ENCODE measurements at regions of chr7 and their contacts with region 1.

Region 1: DNA sequence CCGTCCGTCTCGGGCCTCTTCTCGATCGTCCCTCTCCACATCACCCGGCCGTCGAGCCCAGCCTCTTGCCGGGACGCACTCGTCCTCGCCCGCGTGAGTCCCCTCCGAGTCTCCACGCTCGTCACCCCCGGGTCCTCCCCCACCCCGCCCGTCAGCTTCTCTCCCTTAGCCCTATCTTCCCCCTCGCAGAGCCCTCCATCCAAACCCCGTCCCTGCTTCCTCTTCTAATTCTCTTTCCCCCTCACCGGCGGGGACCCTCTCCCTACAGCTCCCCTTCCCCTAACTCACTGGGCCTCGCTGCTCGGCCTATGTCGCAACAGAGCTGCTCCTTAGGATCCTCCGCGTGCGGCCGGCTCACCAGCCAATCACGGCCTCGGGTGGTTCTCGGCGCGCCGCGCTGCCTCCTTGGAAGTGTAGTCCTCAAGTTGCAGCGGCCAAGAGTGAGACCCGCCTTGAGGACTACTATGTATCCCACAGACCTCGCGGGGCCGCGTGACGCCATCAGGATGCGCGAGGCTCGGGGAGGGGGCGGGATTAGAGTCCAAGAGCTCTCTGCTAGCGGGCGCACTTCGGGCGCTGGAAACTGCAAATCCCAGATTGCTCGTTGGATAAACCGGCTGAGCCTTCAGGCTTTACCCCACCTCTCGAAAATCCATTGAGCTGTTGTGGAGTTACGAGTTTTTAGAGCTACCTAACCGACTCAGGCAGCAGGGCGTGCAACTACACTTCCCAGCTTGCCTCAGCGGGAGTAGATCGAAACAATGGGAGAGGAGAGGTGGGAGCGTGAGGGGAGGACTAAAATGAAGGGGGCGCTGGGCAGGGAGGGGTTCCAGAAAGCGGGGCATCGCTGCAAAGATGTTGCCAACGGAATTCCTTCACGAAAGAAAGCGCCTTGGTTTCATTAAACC is at the start of gene ABCF2:
- DNase-seq: peak; percentile 94 to 99 (median 98)
- ATAC-seq: peak; percentile 98
- H3K4me3 ChIP-seq: peak within 1 kb of the TSS; percentile 69 to 84
- H3K4me3 Mint-ChIP-seq: peak within 1 kb of the TSS; percentile 100
- H3K27ac ChIP-seq: peak within 1 kb of the TSS; percentile 67 to 79
- H3K27ac Mint-ChIP-seq: peak within 1 kb of the TSS; percentile 97
- H3K4me1 ChIP-seq: peaks cover 27% of the 10 kb centered on the region
- H3K4me1 Mint-ChIP-seq: peaks cover 48% of the 10 kb centered on the region
- H3K27me3 ChIP-seq: no peaks in the 10 kb centered on the region
- H3K27me3 Mint-ChIP-seq: no peaks in the 10 kb centered on the region
- CTCF ChIP-seq: no peak
- total RNA-seq, gene ABCF2: 12.7 to 16.5 TPM

Region 2: GRCh38 chr7:151028131-151028947 is 198.8 kb before region 1 on chr7 and contains the start of gene ABCB8:
- CTCF ChIA-PET with region 1: no interaction called
- POLR2A ChIA-PET with region 1: no interaction called
- intact Hi-C with region 1: loop called in 1 of 2 experiments (anchors 1 kb)
- DNase-seq: peak; percentile 93 to 99 (median 98)
- ATAC-seq: peak; percentile 92
- H3K4me3 ChIP-seq: peak within 1 kb of the TSS; percentile 67 to 75
- H3K4me3 Mint-ChIP-seq: peak within 1 kb of the TSS; percentile 96
- H3K27ac ChIP-seq: peak within 1 kb of the TSS; percentile 94 to 96
- H3K27ac Mint-ChIP-seq: peak within 1 kb of the TSS; percentile 99
- H3K4me1 ChIP-seq: peaks cover 12% of the 10 kb centered on the region
- H3K4me1 Mint-ChIP-seq: peaks cover 24% of the 10 kb centered on the region
- H3K27me3 ChIP-seq: no peaks in the 10 kb centered on the region
- H3K27me3 Mint-ChIP-seq: no peaks in the 10 kb centered on the region
- CTCF ChIP-seq: peak; percentile 35
- total RNA-seq, gene ABCB8: 43.6 to 49.3 TPM

Region 3: GRCh38 chr7:151172273-151173141 is 54.6 kb before region 1 on chr7:
- CTCF ChIA-PET with region 1: interaction called, 6 read pairs
- POLR2A ChIA-PET with region 1: no interaction called
- intact Hi-C with region 1: loop called in 1 of 2 experiments (anchors 1 kb)
- DNase-seq: peak; percentile 52 to 88 (median 78)
- ATAC-seq: peak; percentile 87
- H3K4me3 ChIP-seq: no peak overlapping the region
- H3K4me3 Mint-ChIP-seq: no peak overlapping the region
- H3K27ac ChIP-seq: no peak overlapping the region
- H3K27ac Mint-ChIP-seq: no peak overlapping the region
- H3K4me1 ChIP-seq: peaks cover 5% of the 10 kb centered on the region
- H3K4me1 Mint-ChIP-seq: peaks cover 10% of the 10 kb centered on the region
- H3K27me3 ChIP-seq: peaks cover 0 to 12% of the 10 kb centered on the region in 2 experiments
- H3K27me3 Mint-ChIP-seq: peaks cover 62% of the 10 kb centered on the region
- CTCF ChIP-seq: peak; percentile 100

Region 4: GRCh38 chr7:151237244-151238189 is 10.4 kb after region 1 on chr7:
- CTCF ChIA-PET with region 1: interaction called, 7 read pairs
- POLR2A ChIA-PET with region 1: interaction called, 10 read pairs
- intact Hi-C with region 1: no loop called
- DNase-seq: no peak
- ATAC-seq: no peak
- H3K4me3 ChIP-seq: no peak overlapping the region
- H3K4me3 Mint-ChIP-seq: no peak overlapping the region
- H3K27ac ChIP-seq: no peak overlapping the region
- H3K27ac Mint-ChIP-seq: no peak overlapping the region
- H3K4me1 ChIP-seq: peaks cover 11% of the 10 kb centered on the region
- H3K4me1 Mint-ChIP-seq: peaks cover 16% of the 10 kb centered on the region
- H3K27me3 ChIP-seq: no peaks in the 10 kb centered on the region
- H3K27me3 Mint-ChIP-seq: no peaks in the 10 kb centered on the region
- CTCF ChIP-seq: no peak

Region 5: GRCh38 chr7:151341357-151342101 is 114.4 kb after region 1 on chr7 and contains the start of gene NUB1:
- CTCF ChIA-PET with region 1: no interaction called
- POLR2A ChIA-PET with region 1: interaction called, 5 read pairs
- intact Hi-C with region 1: loop called (anchors 2 to 5 kb)
- DNase-seq: peak; percentile 83 to 98 (median 92)
- ATAC-seq: peak; percentile 91
- H3K4me3 ChIP-seq: peak within 1 kb of the TSS; percentile 68 to 82
- H3K4me3 Mint-ChIP-seq: peak within 1 kb of the TSS; percentile 88
- H3K27ac ChIP-seq: peak within 1 kb of the TSS; percentile 72 to 75
- H3K27ac Mint-ChIP-seq: peak within 1 kb of the TSS; percentile 92
- H3K4me1 ChIP-seq: peaks cover 23% of the 10 kb centered on the region
- H3K4me1 Mint-ChIP-seq: peaks cover 35% of the 10 kb centered on the region
- H3K27me3 ChIP-seq: no peaks in the 10 kb centered on the region
- H3K27me3 Mint-ChIP-seq: no peaks in the 10 kb centered on the region
- CTCF ChIP-seq: no peak
- total RNA-seq, gene NUB1: 78.4 to 81.2 TPM